ENCODE measurements at regions of chr1 and their contacts with region 1.

Region 1: GRCh38 chr1:50873458-50874187 is 86.4 kb downstream of the FAF1 start:
- DNase-seq: peak; percentile 82
- H3K4me3 Mint-ChIP-seq: peak overlapping the region; percentile 54
- H3K27ac Mint-ChIP-seq: no peak overlapping the region
- H3K4me1 Mint-ChIP-seq: peaks cover 6% of the 10 kb centered on the region
- H3K27me3 Mint-ChIP-seq: no peaks in the 10 kb centered on the region

Region 2: GRCh38 chr1:50139339-50140181 is 734.1 kb before region 1 on chr1:
- CTCF ChIA-PET with region 1: no interaction called
- POLR2A ChIA-PET with region 1: no interaction called
- intact Hi-C with region 1: no loop called
- DNase-seq: no peak
- H3K4me3 Mint-ChIP-seq: no peak overlapping the region
- H3K27ac Mint-ChIP-seq: no peak overlapping the region
- H3K4me1 Mint-ChIP-seq: no peaks in the 10 kb centered on the region
- H3K27me3 Mint-ChIP-seq: peaks cover 11% of the 10 kb centered on the region

Region 3: GRCh38 chr1:50666849-50667248 is 206.8 kb before region 1 on chr1:
- CTCF ChIA-PET with region 1: no interaction called
- POLR2A ChIA-PET with region 1: no interaction called
- intact Hi-C with region 1: no loop called
- DNase-seq: no peak
- H3K4me3 Mint-ChIP-seq: no peak overlapping the region
- H3K27ac Mint-ChIP-seq: no peak overlapping the region
- H3K4me1 Mint-ChIP-seq: no peaks in the 10 kb centered on the region
- H3K27me3 Mint-ChIP-seq: no peaks in the 10 kb centered on the region

Region 4: DNA sequence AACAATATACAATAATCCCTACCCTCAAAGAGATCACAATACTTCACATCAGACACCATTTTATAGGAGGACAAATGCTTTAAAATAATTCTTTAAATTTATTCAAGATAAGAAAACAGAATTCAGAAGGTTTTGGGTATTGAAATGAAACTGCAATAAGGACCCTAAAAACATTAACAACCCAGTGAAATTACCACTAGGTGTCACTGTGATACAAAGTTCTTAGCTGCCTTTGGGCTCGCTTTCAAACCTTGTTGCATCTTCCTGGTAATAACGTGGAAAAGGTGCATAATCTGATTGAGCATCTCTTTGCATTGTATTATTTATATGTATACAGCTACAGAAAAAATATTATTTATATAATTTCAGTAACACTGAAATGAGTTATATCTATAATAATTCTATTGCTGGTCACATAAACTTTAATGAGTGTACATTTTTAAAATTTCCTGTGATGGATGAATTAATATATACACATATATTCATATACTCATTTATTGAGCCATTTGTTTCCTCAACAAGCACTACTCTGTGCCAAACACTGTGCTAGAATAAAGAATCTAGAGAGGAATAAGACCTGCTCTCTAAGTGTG is 98.8 kb before region 1 on chr1:
- CTCF ChIA-PET with region 1: interaction called, 11 read pairs
- POLR2A ChIA-PET with region 1: no interaction called
- intact Hi-C with region 1: no loop called
- DNase-seq: no peak
- H3K4me3 Mint-ChIP-seq: no peak overlapping the region
- H3K27ac Mint-ChIP-seq: no peak overlapping the region
- H3K4me1 Mint-ChIP-seq: no peaks in the 10 kb centered on the region
- H3K27me3 Mint-ChIP-seq: no peaks in the 10 kb centered on the region

Region 5: DNA sequence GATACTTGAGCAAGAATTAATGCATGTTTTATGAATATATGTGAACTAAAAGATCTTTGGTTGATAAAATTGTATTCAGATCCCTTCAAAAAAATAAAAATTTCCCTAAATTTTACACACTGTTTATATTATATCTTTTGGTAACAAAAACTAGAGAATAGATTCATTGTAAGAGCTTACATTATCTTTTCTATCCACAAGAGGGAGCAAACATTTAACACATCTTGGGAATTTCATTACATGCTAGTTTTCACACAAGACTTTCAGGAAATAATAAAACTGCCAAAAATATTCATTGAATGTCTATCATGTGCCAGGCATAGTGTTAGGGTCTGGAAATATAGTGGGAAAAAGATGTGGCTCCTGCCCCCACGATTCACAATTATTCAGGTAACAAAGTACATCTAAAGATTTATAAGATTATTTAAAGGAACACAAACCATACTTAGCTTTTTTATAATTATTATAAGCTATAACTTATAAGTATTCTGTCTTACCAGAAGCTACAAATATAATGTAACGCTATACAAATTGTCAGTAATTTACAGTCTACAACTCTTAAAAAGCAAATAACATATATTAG is 55.8 kb after region 1 on chr1:
- CTCF ChIA-PET with region 1: interaction called, 11 read pairs
- POLR2A ChIA-PET with region 1: no interaction called
- intact Hi-C with region 1: no loop called
- DNase-seq: no peak
- H3K4me3 Mint-ChIP-seq: no peak overlapping the region
- H3K27ac Mint-ChIP-seq: no peak overlapping the region
- H3K4me1 Mint-ChIP-seq: peaks cover 26% of the 10 kb centered on the region
- H3K27me3 Mint-ChIP-seq: no peaks in the 10 kb centered on the region

Region 6: DNA sequence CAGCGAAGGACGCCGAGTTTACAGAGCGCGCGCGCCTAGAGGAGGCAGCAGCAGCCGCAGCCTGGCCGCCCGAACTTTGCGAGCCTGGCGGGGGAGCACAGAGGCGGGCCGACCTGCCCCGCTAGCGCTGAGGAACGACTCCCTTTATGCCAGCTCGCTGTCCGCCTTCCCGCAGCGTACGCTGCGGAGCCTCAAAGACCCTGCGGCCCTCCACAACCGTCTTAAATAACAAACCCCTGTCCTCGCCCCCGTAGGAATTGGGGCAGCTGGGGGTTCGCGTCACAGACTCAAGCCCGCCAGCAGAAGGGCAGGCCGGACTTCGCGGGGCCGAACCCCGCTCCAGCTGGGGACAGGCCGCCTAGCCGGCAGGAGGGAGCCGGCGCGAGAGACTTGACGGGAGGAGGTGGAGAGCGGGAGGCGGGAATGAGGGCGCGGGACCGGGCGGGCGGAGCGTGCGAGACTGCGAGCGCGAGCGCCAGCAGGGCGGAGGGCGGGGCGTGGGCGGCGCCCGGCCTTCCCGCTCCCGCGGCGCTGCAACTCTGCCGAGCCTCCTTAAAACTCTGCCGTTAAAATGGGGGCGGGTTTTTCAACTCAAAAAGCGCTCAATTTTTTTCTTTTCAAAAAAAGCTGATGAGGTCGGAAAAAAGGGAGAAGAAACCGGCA is 94.7 kb after region 1 on chr1:
- CTCF ChIA-PET with region 1: interaction called, 7 read pairs
- POLR2A ChIA-PET with region 1: no interaction called
- intact Hi-C with region 1: loop called (anchors 2 kb)
- DNase-seq: peak; percentile 86
- H3K4me3 Mint-ChIP-seq: peak overlapping the region; percentile 88
- H3K27ac Mint-ChIP-seq: peak overlapping the region; percentile 97
- H3K4me1 Mint-ChIP-seq: peaks cover 26% of the 10 kb centered on the region
- H3K27me3 Mint-ChIP-seq: peaks cover 12% of the 10 kb centered on the region

Region 7: GRCh38 chr1:51044834-51045233 is 171.2 kb after region 1 on chr1:
- CTCF ChIA-PET with region 1: interaction called, 7 read pairs
- POLR2A ChIA-PET with region 1: no interaction called
- intact Hi-C with region 1: loop called (anchors 2 kb)
- DNase-seq: no peak
- H3K4me3 Mint-ChIP-seq: no peak overlapping the region
- H3K27ac Mint-ChIP-seq: no peak overlapping the region
- H3K4me1 Mint-ChIP-seq: no peaks in the 10 kb centered on the region
- H3K27me3 Mint-ChIP-seq: peaks cover 4% of the 10 kb centered on the region

Region 8: GRCh38 chr1:51296383-51297357 is 423.0 kb after region 1 on chr1:
- CTCF ChIA-PET with region 1: interaction called, 3 read pairs
- POLR2A ChIA-PET with region 1: no interaction called
- intact Hi-C with region 1: loop called (anchors 5 kb)
- DNase-seq: peak; percentile 87
- H3K4me3 Mint-ChIP-seq: peak overlapping the region; percentile 48
- H3K27ac Mint-ChIP-seq: no peak overlapping the region
- H3K4me1 Mint-ChIP-seq: peaks cover 14% of the 10 kb centered on the region
- H3K27me3 Mint-ChIP-seq: no peaks in the 10 kb centered on the region